Left ventricle myocardium superior (tissue), 1 donor: ENCODE measurements at regions of chrX and their contacts with region 1.

Region 1: GRCh38 chrX:13223868-13224555 is 95.8 kb downstream of the ATXN3L start:
- DNase-seq: no peak
- ATAC-seq: peak; percentile 87

Region 2: GRCh38 chrX:13051529-13052172 is 172.4 kb before region 1 on chrX:
- intact Hi-C with region 1: no loop called
- DNase-seq: no peak
- ATAC-seq: no peak

Region 3: DNA sequence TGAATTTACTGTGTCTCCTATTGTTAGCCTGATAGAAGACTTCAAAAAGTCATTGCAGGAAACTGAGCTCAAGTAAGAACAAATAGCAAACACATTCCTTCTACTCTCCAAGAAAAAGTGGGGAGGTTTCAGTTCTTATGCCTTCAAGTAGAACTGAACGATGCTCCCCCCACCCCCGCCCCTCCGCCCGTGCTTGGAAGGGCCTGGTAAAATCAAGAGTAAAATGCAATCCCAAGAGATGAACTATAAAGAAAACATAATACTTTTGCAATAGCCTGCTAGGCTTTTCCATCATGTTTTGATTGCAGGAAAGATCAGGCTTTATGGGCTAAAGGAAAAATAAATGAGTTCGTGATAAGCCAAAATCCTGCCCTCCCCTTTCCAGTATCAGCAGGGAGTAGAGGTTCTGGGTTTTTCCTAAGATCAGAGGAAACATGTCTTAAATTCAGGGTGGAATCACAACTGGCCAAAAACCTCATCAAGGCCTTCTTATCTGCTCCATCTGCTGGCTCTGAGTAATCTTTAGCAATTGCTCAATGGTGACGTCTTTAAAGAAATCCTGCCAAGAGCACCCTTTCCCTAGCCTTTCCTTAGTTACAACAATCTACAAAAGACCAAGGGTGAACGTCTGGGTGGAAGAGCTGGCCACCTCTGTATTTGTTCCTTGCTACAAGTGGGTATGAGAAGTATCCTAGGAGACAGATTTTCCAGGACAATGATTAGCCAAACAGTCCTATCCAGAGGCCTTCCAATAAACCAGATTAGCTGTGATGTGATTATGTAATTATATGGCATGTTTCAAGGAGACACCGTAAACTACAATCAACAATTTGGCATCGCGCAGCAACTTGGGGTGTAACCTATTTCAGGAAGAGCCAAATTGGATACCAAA is 113.3 kb before region 1 on chrX:
- intact Hi-C with region 1: loop called (anchors 10 kb)
- DNase-seq: peak; percentile 41
- ATAC-seq: peak; percentile 89